ENCODE measurements at regions of chr1 and their contacts with region 1.

Region 1: DNA sequence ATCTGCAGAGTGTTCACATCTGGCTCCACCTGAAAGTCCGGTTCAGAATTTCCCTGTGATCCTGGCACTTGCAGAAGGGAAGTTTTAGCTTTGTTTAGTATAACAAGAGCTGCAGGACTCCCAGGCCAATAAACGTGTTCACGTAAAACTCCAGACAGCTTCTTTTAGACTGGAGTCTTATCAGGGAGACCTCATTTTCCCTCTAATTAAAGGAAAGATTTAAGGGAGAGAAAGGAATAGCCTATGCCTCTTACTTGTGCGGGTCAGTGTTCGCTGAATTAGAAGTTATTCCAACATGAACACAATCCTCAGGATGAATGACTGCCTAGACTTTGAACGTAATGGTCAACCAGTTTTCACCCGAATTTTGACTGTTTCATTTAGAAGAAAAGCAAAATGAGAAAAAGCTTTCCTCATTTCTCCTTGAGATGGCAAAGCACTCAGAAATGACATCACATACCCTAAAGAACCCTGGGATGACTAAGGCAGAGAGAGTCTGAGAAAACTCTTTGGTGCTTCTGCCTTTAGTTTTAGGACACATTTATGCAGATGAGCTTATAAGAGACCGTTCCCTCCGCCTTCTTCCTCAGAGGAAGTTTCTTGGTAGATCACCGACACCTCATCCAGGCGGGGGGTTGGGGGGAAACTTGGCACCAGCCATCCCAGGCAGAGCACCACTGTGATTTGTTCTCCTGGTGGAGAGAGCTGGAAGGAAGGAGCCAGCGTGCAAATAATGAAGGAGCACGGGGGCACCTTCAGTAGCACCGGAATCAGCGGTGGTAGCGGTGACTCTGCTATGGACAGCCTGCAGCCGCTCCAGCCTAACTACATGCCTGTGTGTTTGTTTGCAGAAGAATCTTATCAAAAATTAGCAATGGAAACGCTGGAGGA is 202.1 kb upstream of the SGIP1 start:
- DNase-seq: peak; percentile 93
- H3K4me3 ChIP-seq: peak overlapping the region; percentile 55 to 63 (median 60)
- H3K27ac ChIP-seq: peak overlapping the region; percentile 79 to 89 (median 84)
- H3K4me1 ChIP-seq: peaks cover 17 to 56% (median 52%) of the 10 kb centered on the region in 4 donors
- H3K27me3 ChIP-seq: no peaks in the 10 kb centered on the region
- CTCF ChIP-seq: peak in 2 of 3 experiments; percentile 29 to 48
- EP300 ChIP-seq: no peak
- POLR2A ChIP-seq: no peak

Region 2: DNA sequence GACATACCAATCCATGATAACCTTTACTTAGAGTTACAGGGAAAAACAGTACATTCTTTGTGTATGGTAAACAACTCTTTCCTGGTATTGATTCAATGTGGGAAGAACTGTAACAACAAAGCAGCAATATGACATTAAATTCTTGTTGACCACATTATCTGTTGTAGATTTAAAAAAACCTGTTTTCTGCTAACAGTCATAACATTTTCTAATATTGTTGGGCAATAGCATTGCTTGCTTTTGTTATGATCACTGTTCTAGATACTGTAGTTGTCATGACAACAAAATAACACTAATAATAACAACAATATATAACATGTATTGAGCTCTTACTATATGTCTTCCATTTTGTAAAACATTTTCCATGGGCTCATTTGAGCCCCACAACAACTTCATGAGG is 485.0 kb before region 1 on chr1:
- intact Hi-C with region 1: no loop called
- DNase-seq: no peak
- H3K4me3 ChIP-seq: no peak overlapping the region
- H3K27ac ChIP-seq: no peak overlapping the region
- H3K4me1 ChIP-seq: peaks cover 0 to 11% (median 9%) of the 10 kb centered on the region in 4 donors
- H3K27me3 ChIP-seq: no peaks in the 10 kb centered on the region
- CTCF ChIP-seq: no peak
- EP300 ChIP-seq: no peak
- POLR2A ChIP-seq: no peak

Region 3: GRCh38 chr1:66271216-66271903 is 60.5 kb before region 1 on chr1:
- intact Hi-C with region 1: loop called (anchors 5 kb)
- DNase-seq: peak; percentile 95
- H3K4me3 ChIP-seq: peak overlapping the region; percentile 30 to 39 (median 36)
- H3K27ac ChIP-seq: peak overlapping the region; percentile 84 to 87 (median 86)
- H3K4me1 ChIP-seq: peaks cover 51 to 64% (median 60%) of the 10 kb centered on the region in 4 donors
- H3K27me3 ChIP-seq: no peaks in the 10 kb centered on the region
- CTCF ChIP-seq: no peak
- EP300 ChIP-seq: peak; percentile 74
- POLR2A ChIP-seq: no peak